ENCODE measurements at regions of chr2 and their contacts with region 1.

Region 1: GRCh38 chr2:72770879-72771461 is 54.9 kb downstream of the EXOC6B start:
- DNase-seq: peak; percentile 72
- ATAC-seq: no peak
- H3K4me3 ChIP-seq: no peak overlapping the region
- H3K4me3 Mint-ChIP-seq: no peak overlapping the region
- H3K27ac ChIP-seq: no peak overlapping the region
- H3K27ac Mint-ChIP-seq: no peak overlapping the region
- H3K4me1 ChIP-seq: no peaks in the 10 kb centered on the region
- H3K4me1 Mint-ChIP-seq: no peaks in the 10 kb centered on the region
- H3K27me3 ChIP-seq: no peaks in the 10 kb centered on the region
- H3K27me3 Mint-ChIP-seq: no peaks in the 10 kb centered on the region
- CTCF ChIP-seq: peak; percentile 97

Region 2: GRCh38 chr2:72825241-72826155 is 54.5 kb after region 1 on chr2 and contains the start of gene EXOC6B:
- CTCF ChIA-PET with region 1: no interaction called
- POLR2A ChIA-PET with region 1: no interaction called
- intact Hi-C with region 1: loop called (anchors 10 kb)
- DNase-seq: peak; percentile 87
- ATAC-seq: peak; percentile 89
- H3K4me3 ChIP-seq: peak within 1 kb of the TSS; percentile 53 to 81 (median 70)
- H3K4me3 Mint-ChIP-seq: peak within 1 kb of the TSS; percentile 93
- H3K27ac ChIP-seq: peak within 1 kb of the TSS; percentile 16 to 68
- H3K27ac Mint-ChIP-seq: peak within 1 kb of the TSS; percentile 80
- H3K4me1 ChIP-seq: peaks cover 13 to 14% of the 10 kb centered on the region in 2 donors
- H3K4me1 Mint-ChIP-seq: peaks cover 25% of the 10 kb centered on the region
- H3K27me3 ChIP-seq: peaks cover 0 to 10% (median 0%) of the 10 kb centered on the region in 4 experiments
- H3K27me3 Mint-ChIP-seq: peaks cover 17% of the 10 kb centered on the region
- CTCF ChIP-seq: no peak
- total RNA-seq, gene EXOC6B: 22.3 and 22.6 TPM in 2 replicates

Region 3: DNA sequence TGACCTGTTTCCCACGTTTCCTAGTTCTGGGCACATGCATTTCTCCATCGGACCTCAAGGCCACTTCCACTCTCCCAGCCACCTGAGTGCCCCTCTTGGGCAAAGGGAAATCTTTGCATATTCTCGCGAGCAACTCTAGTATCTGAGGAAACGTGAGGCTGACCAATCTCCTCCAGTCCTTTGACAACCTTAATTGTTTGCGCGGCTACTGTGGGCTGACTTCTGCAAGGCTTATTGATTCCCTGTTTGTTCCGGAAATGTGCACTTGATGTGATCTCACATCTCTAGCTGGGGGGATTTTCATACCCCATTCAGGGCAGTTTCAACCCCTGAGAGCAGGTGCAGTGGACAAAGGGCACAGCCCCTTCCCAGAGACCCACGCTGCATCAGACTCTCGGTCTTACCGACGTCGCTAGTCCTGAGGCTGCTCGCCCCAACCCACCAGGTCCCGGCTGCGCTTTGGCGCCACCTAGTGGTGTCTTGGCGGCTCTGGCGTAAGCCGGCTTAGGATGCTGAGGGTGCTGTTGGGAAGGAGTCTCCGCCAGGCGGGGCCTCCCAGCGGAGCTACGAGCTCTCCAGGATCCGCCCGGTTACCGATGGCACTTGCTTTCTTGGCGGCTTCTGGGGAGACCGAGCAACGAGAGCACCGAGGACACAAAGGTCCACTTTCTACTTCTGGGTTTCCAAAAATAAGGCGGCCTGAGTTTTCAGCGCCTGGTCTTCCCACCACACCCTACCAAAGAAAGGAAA is 91.4 kb after region 1 on chr2:
- CTCF ChIA-PET with region 1: interaction called, 19 read pairs
- POLR2A ChIA-PET with region 1: interaction called, 7 read pairs
- intact Hi-C with region 1: loop called (anchors 1 kb)
- DNase-seq: peak; percentile 87
- ATAC-seq: peak; percentile 88
- H3K4me3 ChIP-seq: peak overlapping the region in 2 of 5 experiments; percentile 34 to 50
- H3K4me3 Mint-ChIP-seq: peak overlapping the region; percentile 68
- H3K27ac ChIP-seq: no peak overlapping the region
- H3K27ac Mint-ChIP-seq: no peak overlapping the region
- H3K4me1 ChIP-seq: peaks cover 10% of the 10 kb centered on the region in 2 donors
- H3K4me1 Mint-ChIP-seq: peaks cover 12% of the 10 kb centered on the region
- H3K27me3 ChIP-seq: peaks cover 0 to 29% (median 22%) of the 10 kb centered on the region in 4 experiments
- H3K27me3 Mint-ChIP-seq: peaks cover 44% of the 10 kb centered on the region
- CTCF ChIP-seq: peak; percentile 99